ENCODE measurements at regions of chr7 and their contacts with region 1.

Region 1: GRCh38 chr7:134865001-134865845 is 85.8 kb downstream of the CALD1 start:
- DNase-seq: no peak
- ATAC-seq: no peak; the same call in 2 of the 3 replicates
- H3K4me3 ChIP-seq: no peak overlapping the region
- H3K27ac ChIP-seq: no peak overlapping the region
- H3K4me1 ChIP-seq: no peaks in the 10 kb centered on the region
- H3K27me3 ChIP-seq: no peaks in the 10 kb centered on the region
- CTCF ChIP-seq: no peak
- EP300 ChIP-seq: no peak
- POLR2A ChIP-seq: no peak
- RAD21 ChIP-seq: no peak

Region 2: DNA sequence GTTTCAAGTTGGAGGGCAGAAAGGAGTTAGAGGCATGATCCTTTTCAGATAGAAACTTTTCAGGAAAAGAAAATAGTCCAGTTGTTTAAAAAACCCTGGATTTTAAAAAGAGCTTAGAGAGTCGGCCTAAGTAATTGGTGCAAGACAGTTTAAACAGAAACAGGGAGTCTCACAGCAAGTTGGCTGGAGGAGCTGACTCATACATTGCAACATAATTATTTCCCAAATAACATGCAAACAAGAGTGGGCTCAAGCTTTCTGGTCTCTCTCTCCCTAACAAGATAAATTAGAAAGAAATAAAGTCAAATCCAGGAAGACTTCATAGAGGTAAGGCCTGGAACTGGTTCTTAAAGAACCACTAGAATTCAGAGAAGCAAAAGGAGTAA is 20.7 kb after region 1 on chr7:
- CTCF ChIA-PET with region 1: no interaction called
- POLR2A ChIA-PET with region 1: no interaction called
- in situ Hi-C with region 1: no loop called
- intact Hi-C with region 1: loop called (anchors 1 kb)
- DNase-seq: peak; percentile 52
- ATAC-seq: peak; percentile 45; the same call in 2 of the 3 replicates
- H3K4me3 ChIP-seq: no peak overlapping the region
- H3K27ac ChIP-seq: no peak overlapping the region
- H3K4me1 ChIP-seq: peaks cover 34% of the 10 kb centered on the region
- H3K27me3 ChIP-seq: no peaks in the 10 kb centered on the region
- CTCF ChIP-seq: no peak
- EP300 ChIP-seq: no peak
- POLR2A ChIP-seq: no peak
- RAD21 ChIP-seq: no peak